IMR-90 (cell line): ENCODE measurements at regions of chr12 and their contacts with region 1.

Region 1: GRCh38 chr12:30000401-30000800 is 216.7 kb upstream of the TMTC1 start:
- DNase-seq: no peak
- ATAC-seq: no peak
- H3K4me3 ChIP-seq: no peak overlapping the region
- H3K27ac ChIP-seq: no peak overlapping the region
- H3K4me1 ChIP-seq: no peaks in the 10 kb centered on the region
- H3K27me3 ChIP-seq: peaks cover 7% of the 10 kb centered on the region
- CTCF ChIP-seq: no peak
- POLR2A ChIP-seq: no peak
- RAD21 ChIP-seq: no peak

Region 2: DNA sequence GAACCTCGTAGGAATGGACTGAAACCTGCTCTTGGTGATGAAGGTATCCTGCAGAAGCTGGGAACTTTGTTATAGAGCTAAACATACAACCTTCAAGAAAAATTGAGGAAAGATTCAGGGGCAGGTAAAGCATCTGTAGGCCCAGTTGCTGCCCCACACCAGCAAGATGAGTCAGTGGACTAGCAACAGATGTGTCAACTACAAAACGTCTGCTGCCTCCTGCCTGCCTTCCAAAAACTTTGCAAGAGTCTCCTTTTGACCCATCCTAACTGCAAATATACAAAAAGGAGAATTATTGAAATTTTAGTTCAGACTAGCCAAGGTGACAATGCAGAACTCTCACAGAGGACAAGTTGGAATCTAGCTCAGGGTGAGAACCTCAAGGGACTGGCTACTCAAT is 155.7 kb before region 1 on chr12:
- CTCF ChIA-PET with region 1: no interaction called
- POLR2A ChIA-PET with region 1: no interaction called
- dilution Hi-C with region 1: no loop called
- in situ Hi-C with region 1: no loop called
- intact Hi-C with region 1: no loop called
- DNase-seq: peak; percentile 2
- ATAC-seq: no peak
- H3K4me3 ChIP-seq: no peak overlapping the region
- H3K27ac ChIP-seq: no peak overlapping the region
- H3K4me1 ChIP-seq: no peaks in the 10 kb centered on the region
- H3K27me3 ChIP-seq: no peaks in the 10 kb centered on the region
- CTCF ChIP-seq: 0 out of 2 replicates have a peak, but pooled peaks have one; percentile 6
- POLR2A ChIP-seq: no peak
- RAD21 ChIP-seq: no peak

Region 3: DNA sequence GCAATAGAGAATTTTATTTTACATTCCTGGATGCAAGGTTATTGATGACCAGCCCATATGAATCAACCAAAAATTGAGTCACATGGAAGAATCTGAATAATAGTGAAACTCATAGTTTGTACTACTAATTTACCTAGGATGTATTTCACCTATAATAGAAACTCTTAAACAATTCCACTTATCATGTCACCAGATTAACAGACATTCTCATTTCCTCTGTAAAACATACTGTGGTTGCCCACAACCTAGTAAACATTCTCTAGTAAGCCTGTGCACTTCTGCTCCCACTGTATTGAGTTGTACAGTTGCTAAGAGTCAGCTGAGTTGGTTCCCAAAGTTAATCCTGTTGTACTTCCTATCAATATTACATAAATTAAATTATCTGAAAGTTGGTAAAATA is 20.1 kb before region 1 on chr12:
- CTCF ChIA-PET with region 1: no interaction called
- POLR2A ChIA-PET with region 1: no interaction called
- dilution Hi-C with region 1: no loop called
- in situ Hi-C with region 1: no loop called
- intact Hi-C with region 1: loop called (anchors 1 kb)
- DNase-seq: no peak
- ATAC-seq: no peak
- H3K4me3 ChIP-seq: no peak overlapping the region
- H3K27ac ChIP-seq: no peak overlapping the region
- H3K4me1 ChIP-seq: no peaks in the 10 kb centered on the region
- H3K27me3 ChIP-seq: peaks cover 2% of the 10 kb centered on the region
- CTCF ChIP-seq: no peak
- POLR2A ChIP-seq: no peak
- RAD21 ChIP-seq: no peak